Activated CD4-positive, alpha-beta T cell treated with anti-CD3 and anti-CD28 coated beads, Interleukin-2, amount 10 ng/mL, durations not matched to agents 24 days and 14 days (primary cell): ENCODE measurements at regions of chr2 and their contacts with region 1.

Region 1: GRCh38 chr2:196277002-196277401 is 105.6 kb upstream of the STK17B start:
- DNase-seq: peak; percentile 80
- H3K4me3 Mint-ChIP-seq: no peak overlapping the region
- H3K27ac Mint-ChIP-seq: no peak overlapping the region
- H3K4me1 Mint-ChIP-seq: peaks cover 48% of the 10 kb centered on the region
- H3K27me3 Mint-ChIP-seq: no peaks in the 10 kb centered on the region

Region 2: DNA sequence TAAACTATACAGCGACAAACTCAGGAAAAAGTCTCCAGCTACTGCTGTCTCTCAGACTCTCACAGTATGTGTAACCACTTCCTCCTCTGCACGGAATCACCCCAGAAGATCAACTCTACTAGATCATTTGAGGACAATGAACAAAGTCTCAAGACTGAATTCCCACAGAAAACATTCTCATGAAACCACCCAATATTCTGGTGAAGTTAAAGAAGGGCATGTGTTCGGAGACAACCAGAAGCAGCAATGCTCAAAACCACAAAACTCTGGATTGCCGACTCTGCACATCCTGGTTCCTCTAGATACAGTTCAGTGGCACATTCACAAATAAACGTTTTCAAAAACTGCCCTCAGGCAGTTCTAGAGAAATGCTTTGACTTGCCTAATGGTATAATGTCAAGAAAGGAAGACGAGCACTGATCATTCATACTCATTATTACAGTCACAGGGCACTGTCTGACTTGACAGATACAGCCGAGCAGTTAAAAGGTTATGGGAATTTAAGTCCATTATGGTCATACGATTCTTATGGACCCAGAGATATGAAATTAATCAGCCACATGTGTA is 13.7 kb before region 1 on chr2:
- intact Hi-C with region 1: loop called (anchors 1 kb)
- DNase-seq: peak; percentile 89
- H3K4me3 Mint-ChIP-seq: peak overlapping the region; percentile 72
- H3K27ac Mint-ChIP-seq: peak overlapping the region; percentile 93
- H3K4me1 Mint-ChIP-seq: peaks cover 58% of the 10 kb centered on the region
- H3K27me3 Mint-ChIP-seq: no peaks in the 10 kb centered on the region

Region 3: GRCh38 chr2:196376984-196377877 is 100.2 kb after region 1 on chr2:
- intact Hi-C with region 1: no loop called
- DNase-seq: no peak
- H3K4me3 Mint-ChIP-seq: no peak overlapping the region
- H3K27ac Mint-ChIP-seq: no peak overlapping the region
- H3K4me1 Mint-ChIP-seq: peaks cover 3% of the 10 kb centered on the region
- H3K27me3 Mint-ChIP-seq: no peaks in the 10 kb centered on the region